Activated CD4-positive, alpha-beta memory T cell treated with anti-CD3 and anti-CD28 coated beads, Interleukin-2, amount 10 ng/mL, durations not matched to agents 7 days and 5 days (primary cell): ENCODE measurements at regions of chr1 and their contacts with region 1.

Region 1: GRCh38 chr1:223695941-223696340 is 16.4 kb upstream of the CAPN2 start:
- DNase-seq: no peak
- H3K4me3 Mint-ChIP-seq: no peak overlapping the region
- H3K27ac Mint-ChIP-seq: no peak overlapping the region
- H3K4me1 Mint-ChIP-seq: peaks cover 15% of the 10 kb centered on the region
- H3K27me3 Mint-ChIP-seq: peaks cover 2% of the 10 kb centered on the region

Region 2: DNA sequence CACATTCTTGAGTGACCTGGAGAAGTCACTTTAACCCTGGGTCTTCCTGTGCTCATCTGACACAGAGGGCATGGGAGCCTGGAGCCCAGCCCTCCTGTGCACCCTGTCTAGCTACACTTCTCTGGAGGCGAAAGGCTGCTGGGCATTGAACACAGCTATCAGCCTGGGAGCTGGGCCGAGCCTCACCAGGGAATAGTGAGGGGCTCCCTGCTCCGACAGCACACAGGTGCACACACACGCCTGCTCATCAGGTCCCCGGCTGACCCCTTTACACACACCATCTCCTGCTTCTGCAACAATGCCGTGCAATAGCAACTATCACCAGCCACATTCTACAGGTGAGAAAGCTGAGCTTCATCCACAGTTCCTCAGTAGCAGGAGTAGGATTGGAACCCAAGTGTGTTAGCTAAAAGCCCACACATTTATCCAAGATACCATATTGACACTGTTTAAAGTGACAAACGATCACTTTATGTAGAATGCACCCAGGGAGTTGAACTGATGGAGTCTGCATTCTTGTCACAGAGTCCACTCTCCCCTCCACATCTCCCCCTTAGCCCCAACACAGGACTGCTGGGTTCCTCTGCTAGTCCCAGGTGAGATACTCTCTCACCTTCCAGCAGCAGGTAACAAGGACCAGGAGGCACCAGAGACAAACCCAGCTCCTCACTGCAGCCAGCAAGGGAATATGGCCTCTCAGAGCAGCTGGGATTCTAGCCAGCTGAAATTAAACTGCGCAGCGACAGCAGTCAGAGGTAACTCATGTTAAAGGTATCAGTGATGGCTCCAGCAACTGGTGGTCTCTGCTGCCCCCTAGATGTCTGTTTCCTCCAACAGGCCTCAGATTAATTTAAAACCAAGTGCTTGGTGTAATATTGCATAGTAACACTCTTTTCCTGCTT is 12.1 kb before region 1 on chr1:
- CTCF ChIA-PET with region 1: interaction called, 13 read pairs
- POLR2A ChIA-PET with region 1: interaction called, 3 read pairs
- DNase-seq: peak; percentile 48
- H3K4me3 Mint-ChIP-seq: no peak overlapping the region
- H3K27ac Mint-ChIP-seq: no peak overlapping the region
- H3K4me1 Mint-ChIP-seq: peaks cover under 1% of the 10 kb centered on the region
- H3K27me3 Mint-ChIP-seq: peaks cover 25% of the 10 kb centered on the region